ENCODE measurements at regions of chr4 and their contacts with region 1.

Region 1: GRCh38 chr4:42855779-42856178 is 36.7 kb upstream of the GRXCR1 start:
- DNase-seq: no peak
- H3K4me3 ChIP-seq: no peak overlapping the region
- H3K27ac ChIP-seq: no peak overlapping the region
- H3K4me1 ChIP-seq: no peaks in the 10 kb centered on the region
- H3K27me3 ChIP-seq: no peaks in the 10 kb centered on the region
- CTCF ChIP-seq: no peak
- EP300 ChIP-seq: no peak
- POLR2A ChIP-seq: no peak
- RAD21 ChIP-seq: no peak

Region 2: DNA sequence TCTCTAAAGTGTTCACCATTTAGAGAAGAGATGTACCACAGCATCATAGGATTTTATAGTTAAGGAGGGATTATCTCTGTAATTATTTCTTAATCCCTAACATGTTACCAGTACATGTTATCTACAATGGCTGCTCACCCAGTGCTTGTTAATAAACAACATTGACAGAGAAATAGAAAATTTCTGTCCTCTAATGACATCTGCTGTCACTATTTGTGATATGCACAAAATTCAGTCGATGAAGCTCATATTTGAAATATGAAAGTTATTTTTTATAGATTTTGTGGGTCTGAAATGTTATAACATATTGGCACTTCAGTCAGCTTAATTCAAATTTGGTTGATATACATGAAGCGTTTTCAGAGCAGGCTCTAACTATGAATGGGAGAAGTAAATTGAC is 12.1 kb before region 1 on chr4:
- CTCF ChIA-PET with region 1: interaction called, 10 read pairs
- POLR2A ChIA-PET with region 1: no interaction called
- DNase-seq: no peak
- H3K4me3 ChIP-seq: no peak overlapping the region
- H3K27ac ChIP-seq: no peak overlapping the region
- H3K4me1 ChIP-seq: no peaks in the 10 kb centered on the region
- H3K27me3 ChIP-seq: no peaks in the 10 kb centered on the region
- CTCF ChIP-seq: no peak
- EP300 ChIP-seq: no peak
- POLR2A ChIP-seq: no peak
- RAD21 ChIP-seq: no peak

Region 3: GRCh38 chr4:42891644-42892043 is 35.9 kb after region 1 on chr4:
- CTCF ChIA-PET with region 1: no interaction called
- POLR2A ChIA-PET with region 1: no interaction called
- DNase-seq: no peak
- H3K4me3 ChIP-seq: no peak overlapping the region
- H3K27ac ChIP-seq: no peak overlapping the region
- H3K4me1 ChIP-seq: no peaks in the 10 kb centered on the region
- H3K27me3 ChIP-seq: no peaks in the 10 kb centered on the region
- CTCF ChIP-seq: no peak
- EP300 ChIP-seq: no peak
- POLR2A ChIP-seq: no peak
- RAD21 ChIP-seq: no peak